Naive thymus-derived CD4-positive, alpha-beta T cell (primary cell): ENCODE measurements at regions of chr17 and their contacts with region 1.

Region 1: GRCh38 chr17:48908047-48908843 is at the start of gene UBE2Z:
- DNase-seq: peak; percentile 71 to 86 (median 84)
- ATAC-seq: peak; percentile 96
- H3K4me3 ChIP-seq: peak within 1 kb of the TSS; percentile 62
- H3K4me3 Mint-ChIP-seq: peak within 1 kb of the TSS; percentile 90 to 100 (median 96)
- H3K27ac ChIP-seq: peak within 1 kb of the TSS; percentile 93
- H3K27ac Mint-ChIP-seq: peak within 1 kb of the TSS; percentile 95 to 99 (median 98)
- H3K4me1 ChIP-seq: peaks cover 22 to 33% of the 10 kb centered on the region in 2 donors
- H3K4me1 Mint-ChIP-seq: peaks cover 32 to 52% (median 50%) of the 10 kb centered on the region in 7 donors
- H3K27me3 ChIP-seq: no peaks in the 10 kb centered on the region
- H3K27me3 Mint-ChIP-seq: no peaks in the 10 kb centered on the region
- total RNA-seq, gene UBE2Z: 71.6 to 96.6 (median 91.8) TPM

Region 2: DNA sequence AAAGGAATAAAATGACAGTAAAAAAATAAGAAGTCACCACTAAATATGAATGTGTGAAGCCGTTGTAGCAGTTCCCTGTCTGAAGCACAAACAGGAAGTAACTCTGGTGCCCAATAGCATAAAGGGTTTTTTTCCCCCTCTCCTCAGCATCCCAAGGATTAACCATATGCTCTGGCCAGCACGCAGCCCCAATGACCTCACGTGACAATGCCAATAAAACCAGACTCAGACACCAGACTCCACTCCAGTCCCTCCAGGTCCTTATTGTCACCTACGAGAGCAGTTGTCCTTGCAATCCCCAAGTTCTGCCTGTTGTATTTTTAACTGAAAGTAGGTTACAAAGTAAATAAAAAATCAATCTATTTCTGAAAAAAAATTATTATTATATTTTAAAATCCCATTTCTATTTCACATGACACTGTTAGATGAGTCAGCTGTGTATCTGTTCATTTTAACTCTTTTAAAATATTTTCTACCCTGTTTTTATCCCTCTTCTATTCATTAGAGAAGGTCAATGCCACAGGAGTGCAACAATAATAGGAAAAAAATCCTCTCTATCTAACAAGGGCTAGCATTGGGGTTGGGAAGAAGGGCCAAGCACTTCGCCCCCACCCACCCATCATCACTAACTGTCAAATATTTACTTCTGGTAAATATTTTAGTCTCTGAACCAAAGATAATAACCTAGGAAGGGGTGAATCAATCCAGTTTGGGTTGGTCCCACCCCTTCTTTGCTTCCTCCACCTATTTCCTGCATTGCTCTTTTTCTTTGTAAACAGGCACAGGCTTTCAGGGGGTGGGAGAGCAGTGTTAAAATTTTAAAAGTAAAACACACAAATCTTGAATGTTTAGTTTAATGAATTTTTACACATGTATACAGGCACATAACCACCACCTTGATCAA is 192.5 kb before region 1 on chr17:
- CTCF ChIA-PET with region 1: no interaction called
- POLR2A ChIA-PET with region 1: no interaction called
- intact Hi-C with region 1: no loop called
- DNase-seq: no peak
- ATAC-seq: no peak
- H3K4me3 ChIP-seq: no peak overlapping the region
- H3K4me3 Mint-ChIP-seq: no peak overlapping the region
- H3K27ac ChIP-seq: no peak overlapping the region
- H3K27ac Mint-ChIP-seq: no peak overlapping the region
- H3K4me1 ChIP-seq: peaks cover 0 to 13% of the 10 kb centered on the region in 2 donors
- H3K4me1 Mint-ChIP-seq: peaks cover 0 to 34% (median 18%) of the 10 kb centered on the region in 7 donors
- H3K27me3 ChIP-seq: peaks cover 18 to 38% of the 10 kb centered on the region in 2 donors
- H3K27me3 Mint-ChIP-seq: peaks cover 65 to 84% (median 78%) of the 10 kb centered on the region in 5 donors

Region 3: GRCh38 chr17:48927978-48928732 is 19.9 kb after region 1 on chr17:
- CTCF ChIA-PET with region 1: no interaction called
- POLR2A ChIA-PET with region 1: interaction called, 4 read pairs
- intact Hi-C with region 1: loop called in 1 of 2 experiments (anchors 2 kb)
- DNase-seq: no peak
- ATAC-seq: no peak
- H3K4me3 ChIP-seq: no peak overlapping the region
- H3K4me3 Mint-ChIP-seq: no peak overlapping the region
- H3K27ac ChIP-seq: no peak overlapping the region
- H3K27ac Mint-ChIP-seq: peak overlapping the region in 6 of 9 donors; percentile 50 to 75 (median 52)
- H3K4me1 ChIP-seq: no peaks in the 10 kb centered on the region
- H3K4me1 Mint-ChIP-seq: peaks cover 0 to 10% (median 5%) of the 10 kb centered on the region in 7 donors
- H3K27me3 ChIP-seq: no peaks in the 10 kb centered on the region
- H3K27me3 Mint-ChIP-seq: no peaks in the 10 kb centered on the region

Region 4: DNA sequence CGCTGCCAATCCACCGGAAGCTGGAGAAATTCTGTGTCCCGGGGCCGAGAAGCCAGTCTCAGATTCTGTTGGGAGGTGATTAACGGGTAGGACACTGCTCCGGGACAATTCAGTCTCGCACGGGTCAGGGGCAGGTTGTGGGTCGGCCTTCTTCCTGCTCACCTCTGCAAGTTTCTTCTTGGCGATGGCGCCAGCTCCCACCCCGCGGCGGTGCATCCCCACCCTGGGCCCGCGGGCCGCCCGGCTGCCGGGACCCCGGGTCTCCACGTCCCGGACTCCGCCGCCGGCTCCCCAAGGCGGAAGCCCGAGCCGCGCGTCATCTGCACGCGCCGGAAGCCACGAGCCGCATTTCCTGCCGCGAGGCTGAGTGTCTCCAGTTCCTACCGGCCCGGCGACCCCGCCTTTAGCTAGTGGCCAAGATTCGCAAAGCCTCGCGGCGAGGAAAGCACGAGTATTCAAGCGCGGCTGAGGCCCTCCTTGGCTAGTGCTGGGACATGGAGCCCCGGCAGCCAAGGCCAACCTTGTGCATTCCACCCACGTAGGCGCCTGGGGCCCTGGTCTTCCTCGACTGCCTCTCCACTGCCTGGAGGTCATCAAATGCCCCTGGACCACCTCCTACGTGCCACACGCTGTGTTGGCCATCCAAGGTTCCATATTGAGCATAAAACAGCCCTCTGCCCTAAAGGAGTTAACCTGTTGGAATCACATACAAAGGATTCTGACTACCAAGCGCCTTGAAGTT is 36.4 kb after region 1 on chr17 and contains the start of gene SNF8:
- CTCF ChIA-PET with region 1: no interaction called
- POLR2A ChIA-PET with region 1: interaction called, 29 read pairs
- intact Hi-C with region 1: loop called (anchors 1 to 2 kb)
- DNase-seq: peak; percentile 84 to 96 (median 91)
- ATAC-seq: peak; percentile 97
- H3K4me3 ChIP-seq: peak within 1 kb of the TSS; percentile 100
- H3K4me3 Mint-ChIP-seq: peak within 1 kb of the TSS; percentile 92 to 100 (median 98)
- H3K27ac ChIP-seq: peak within 1 kb of the TSS; percentile 92
- H3K27ac Mint-ChIP-seq: peak within 1 kb of the TSS; percentile 89 to 99 (median 97)
- H3K4me1 ChIP-seq: peaks cover 11 to 14% of the 10 kb centered on the region in 2 donors
- H3K4me1 Mint-ChIP-seq: peaks cover 4 to 32% (median 12%) of the 10 kb centered on the region in 7 donors
- H3K27me3 ChIP-seq: no peaks in the 10 kb centered on the region
- H3K27me3 Mint-ChIP-seq: peaks cover 0 to 9% (median 0%) of the 10 kb centered on the region in 5 donors
- total RNA-seq, gene SNF8: 54.8 to 122 (median 60.3) TPM